Activated naive CD8-positive, alpha-beta T cell treated with anti-CD3 and anti-CD28 coated beads, Interleukin-2, amount 10 ng/mL, durations not matched to agents 7 days and 5 days (primary cell): ENCODE measurements at regions of chr2 and their contacts with region 1.

Region 1: DNA sequence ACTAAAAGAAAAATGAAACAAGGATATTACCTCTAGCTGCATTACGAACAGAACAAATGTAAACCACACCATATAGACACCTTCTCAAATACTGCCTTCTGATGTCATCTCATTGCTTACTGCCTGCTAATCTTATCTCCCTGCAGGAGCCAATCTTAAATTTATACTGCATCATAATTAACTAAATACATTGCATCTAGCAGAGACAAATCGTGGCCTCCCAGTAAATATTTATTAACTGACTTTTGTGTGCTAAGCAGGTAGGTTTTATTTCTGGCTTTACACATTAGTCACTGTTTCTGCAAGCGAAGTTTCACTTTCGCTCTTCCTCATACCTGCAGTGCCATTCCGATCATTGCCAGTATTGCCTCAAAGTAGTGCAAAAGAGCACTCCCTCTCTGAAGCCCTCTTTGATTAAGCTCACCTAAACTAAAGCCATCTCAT is 67.5 kb downstream of the SPATS2L start:
- DNase-seq: no peak
- ATAC-seq: peak; percentile 89
- H3K4me3 Mint-ChIP-seq: peak overlapping the region; percentile 90
- H3K27ac Mint-ChIP-seq: peak overlapping the region; percentile 96
- H3K4me1 Mint-ChIP-seq: peaks cover 52% of the 10 kb centered on the region
- H3K27me3 Mint-ChIP-seq: no peaks in the 10 kb centered on the region

Region 2: DNA sequence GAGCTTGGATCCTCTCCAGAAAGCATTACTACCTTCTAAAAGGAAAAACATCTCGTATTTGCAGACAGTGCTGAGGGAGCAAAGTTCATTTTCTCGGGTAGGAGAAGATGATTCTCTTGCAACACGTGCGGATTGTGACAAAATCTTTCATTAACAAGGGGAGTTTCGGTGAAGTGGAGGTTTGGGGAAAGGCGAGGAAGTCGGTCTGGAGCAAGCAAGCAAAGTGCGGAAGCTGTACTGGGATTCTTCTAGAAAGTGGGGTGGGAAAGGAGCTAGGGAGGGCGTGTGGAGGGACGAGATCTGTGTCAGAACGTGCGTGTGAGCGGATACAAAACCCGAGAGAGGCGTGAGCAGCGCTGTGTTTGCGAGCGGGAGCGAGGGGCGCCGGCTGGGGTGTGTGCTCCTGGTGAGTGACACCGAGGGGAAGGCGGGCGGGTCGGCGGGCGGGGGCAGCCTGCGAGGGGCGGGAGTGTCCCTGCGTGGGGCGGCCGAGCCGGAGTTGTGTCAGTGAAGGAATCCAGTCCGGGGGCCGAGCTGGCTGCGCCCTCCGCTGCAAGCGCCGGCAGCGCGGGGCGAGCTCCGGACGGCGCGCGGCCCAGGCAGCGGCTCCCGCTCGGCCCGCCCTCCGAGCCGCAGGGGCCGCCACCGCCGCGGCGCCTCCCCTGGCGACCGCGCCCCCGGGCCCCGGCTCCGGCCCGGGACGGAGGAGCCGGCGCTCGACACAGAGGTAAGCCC is 67.6 kb before region 1 on chr2 and contains the start of gene SPATS2L:
- POLR2A ChIA-PET with region 1: interaction called, 10 read pairs
- DNase-seq: no peak
- ATAC-seq: peak; percentile 80
- H3K4me3 Mint-ChIP-seq: peak within 1 kb of the TSS; percentile 94
- H3K27ac Mint-ChIP-seq: peak within 1 kb of the TSS; percentile 92
- H3K4me1 Mint-ChIP-seq: peaks cover 26% of the 10 kb centered on the region
- H3K27me3 Mint-ChIP-seq: peaks cover 29% of the 10 kb centered on the region
- total RNA-seq, gene SPATS2L: 46.3 to 47.1 TPM

Region 3: GRCh38 chr2:200466425-200467418 is 92.7 kb after region 1 on chr2:
- POLR2A ChIA-PET with region 1: interaction called, 15 read pairs
- DNase-seq: no peak
- ATAC-seq: peak; percentile 88
- H3K4me3 Mint-ChIP-seq: peak overlapping the region; percentile 78
- H3K27ac Mint-ChIP-seq: peak overlapping the region; percentile 93
- H3K4me1 Mint-ChIP-seq: peaks cover 32% of the 10 kb centered on the region
- H3K27me3 Mint-ChIP-seq: no peaks in the 10 kb centered on the region